ENCODE measurements at regions of chr1 and their contacts with region 1.

Region 1: GRCh38 chr1:77832901-77833300 is 53.5 kb downstream of the MIGA1 start:
- DNase-seq: peak; percentile 64 to 76
- ATAC-seq: peak; percentile 72 to 81
- H3K4me3 ChIP-seq: peak overlapping the region in 2 of 4 donors; percentile 8 to 20
- H3K27ac ChIP-seq: peak overlapping the region; percentile 91 to 100 (median 97)
- H3K4me1 ChIP-seq: peaks cover 77 to 87% of the 10 kb centered on the region in 2 donors
- H3K27me3 ChIP-seq: no peaks in the 10 kb centered on the region
- CTCF ChIP-seq: no peak
- POLR2A ChIP-seq: peak in 1 of 2 donors; percentile 16

Region 2: DNA sequence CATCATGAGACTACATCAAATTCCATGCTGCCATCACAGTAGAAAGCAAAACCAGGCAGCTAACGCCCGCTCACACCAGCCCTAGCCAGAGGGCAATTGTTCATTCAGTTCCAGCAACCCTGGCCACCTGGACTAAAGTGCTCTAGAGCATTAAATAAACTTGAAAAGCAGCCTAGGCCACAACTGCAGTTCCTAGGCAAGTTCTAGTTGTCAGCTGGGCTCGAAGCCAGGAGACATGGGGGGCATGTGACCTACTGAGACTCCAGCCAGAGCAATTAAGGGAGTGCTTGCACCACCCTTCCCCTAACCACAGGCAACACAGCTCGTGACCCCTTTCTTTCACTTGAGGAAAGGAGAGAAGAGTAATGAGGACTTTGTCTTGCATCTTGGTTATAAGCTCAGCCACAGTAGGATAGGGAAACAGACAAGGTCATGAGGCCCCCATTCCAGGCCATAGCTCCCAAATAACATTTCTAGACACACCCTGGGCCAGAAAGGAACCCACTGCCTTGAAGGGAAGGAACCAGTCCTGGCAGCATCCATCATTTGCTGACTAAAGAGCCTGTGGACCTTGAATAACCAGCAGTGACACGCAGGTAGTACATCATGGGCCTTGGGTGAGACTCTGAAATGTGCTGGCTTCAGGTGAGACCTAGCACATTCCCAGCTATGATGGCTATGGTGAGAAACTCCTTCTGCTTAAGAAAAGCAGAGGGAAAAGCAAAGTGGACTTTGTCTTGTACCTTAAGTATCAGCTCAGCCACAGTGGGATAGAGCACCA is 227.5 kb before region 1 on chr1:
- in situ Hi-C with region 1: no loop called
- intact Hi-C with region 1: no loop called
- DNase-seq: peak; percentile 58 to 64
- ATAC-seq: peak; percentile 36 to 39
- H3K4me3 ChIP-seq: no peak overlapping the region
- H3K27ac ChIP-seq: peak overlapping the region in 1 of 4 donors; percentile 14
- H3K4me1 ChIP-seq: peaks cover 4 to 6% of the 10 kb centered on the region in 2 donors
- H3K27me3 ChIP-seq: no peaks in the 10 kb centered on the region
- CTCF ChIP-seq: no peak
- POLR2A ChIP-seq: no peak

Region 3: DNA sequence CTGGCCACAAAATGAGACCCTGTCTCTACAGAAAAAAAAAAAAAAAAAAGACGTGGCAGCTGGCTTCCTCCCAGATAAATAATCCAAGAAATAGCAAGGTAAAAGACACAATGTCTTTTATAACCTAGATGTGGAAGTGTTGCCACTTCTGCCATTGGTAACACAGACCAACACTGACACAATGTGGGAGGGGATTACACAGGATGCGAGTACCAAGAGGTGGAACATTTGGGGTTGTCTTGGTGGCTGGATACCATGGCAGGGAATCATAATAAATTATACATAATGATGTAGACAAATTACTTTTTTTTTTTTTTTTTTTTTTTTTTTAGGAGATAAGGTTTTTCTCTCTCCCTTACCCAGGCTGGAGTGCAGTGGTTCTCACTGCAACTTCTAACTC is 49.5 kb after region 1 on chr1:
- in situ Hi-C with region 1: loop called in 3 of 4 experiments (anchors 5 to 10 kb)
- intact Hi-C with region 1: no loop called
- DNase-seq: no peak
- ATAC-seq: no peak
- H3K4me3 ChIP-seq: no peak overlapping the region
- H3K27ac ChIP-seq: no peak overlapping the region
- H3K4me1 ChIP-seq: peaks cover 0 to 11% of the 10 kb centered on the region in 2 donors
- H3K27me3 ChIP-seq: no peaks in the 10 kb centered on the region
- CTCF ChIP-seq: no peak
- POLR2A ChIP-seq: no peak

Region 4: DNA sequence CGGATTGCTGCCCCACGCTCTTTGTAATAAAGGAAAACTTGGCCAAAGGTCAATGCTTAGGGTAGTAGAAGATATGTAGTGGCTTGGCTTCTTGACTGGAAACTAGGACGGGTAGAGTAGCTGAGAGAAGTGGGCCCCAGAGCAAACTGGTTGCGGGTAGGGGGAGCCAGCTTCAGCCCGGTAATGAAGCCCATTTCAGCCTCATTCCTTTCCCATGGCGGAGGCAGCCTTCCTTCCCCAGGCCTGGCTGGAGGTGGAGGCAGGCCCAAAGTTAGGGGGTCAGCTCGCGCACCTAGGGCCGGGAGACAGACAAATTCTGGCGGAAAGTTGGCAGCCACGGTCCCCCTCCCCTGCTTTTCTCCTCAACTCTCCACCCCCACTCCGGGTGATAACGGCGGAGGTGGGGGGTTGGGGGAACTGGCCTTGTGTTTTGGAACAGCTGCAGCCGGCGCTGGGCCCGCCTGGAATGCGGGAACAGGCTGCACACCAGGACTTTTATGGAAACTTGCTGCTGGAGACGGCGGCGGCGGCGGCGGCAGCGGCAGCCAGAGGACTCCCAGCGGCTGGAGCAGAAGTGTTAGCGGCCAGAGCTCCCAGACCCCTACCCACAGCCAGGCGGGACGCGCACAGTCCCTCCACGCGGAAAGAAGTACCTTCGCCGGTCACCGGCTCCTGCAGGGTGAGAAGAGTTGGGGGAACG is 55.3 kb after region 1 on chr1 and contains the start of gene NEXN:
- in situ Hi-C with region 1: loop called (anchors 5 to 10 kb)
- intact Hi-C with region 1: loop called (anchors 1 kb)
- DNase-seq: peak; percentile 88 to 95
- ATAC-seq: peak; percentile 74 to 79
- H3K4me3 ChIP-seq: peak within 1 kb of the TSS; percentile 89 to 94 (median 93)
- H3K27ac ChIP-seq: peak within 1 kb of the TSS; percentile 97 to 99 (median 99)
- H3K4me1 ChIP-seq: peaks cover 10 to 40% of the 10 kb centered on the region in 2 donors
- H3K27me3 ChIP-seq: no peaks in the 10 kb centered on the region
- CTCF ChIP-seq: no peak
- POLR2A ChIP-seq: peak; percentile 77 to 92
- total RNA-seq, gene NEXN: 105 to 297 (median 200) TPM

Region 5: GRCh38 chr1:78004719-78005447 is 172.0 kb after region 1 on chr1 and contains the start of gene DNAJB4:
- in situ Hi-C with region 1: no loop called
- intact Hi-C with region 1: loop called (anchors 1 kb)
- DNase-seq: peak; percentile 83 to 84
- ATAC-seq: peak; percentile 99
- H3K4me3 ChIP-seq: peak within 1 kb of the TSS; percentile 65 to 81 (median 70)
- H3K27ac ChIP-seq: peak within 1 kb of the TSS; percentile 83 to 97 (median 91)
- H3K4me1 ChIP-seq: peaks cover 19 to 41% of the 10 kb centered on the region in 2 donors
- H3K27me3 ChIP-seq: no peaks in the 10 kb centered on the region
- CTCF ChIP-seq: peak in 1 of 5 experiments; percentile 13
- POLR2A ChIP-seq: peak; percentile 92 to 100
- total RNA-seq, gene DNAJB4: 35.6 to 84.9 (median 45.3) TPM